K562 (cell line): ENCODE measurements at regions of chr11 and their contacts with region 1.

Region 1: DNA sequence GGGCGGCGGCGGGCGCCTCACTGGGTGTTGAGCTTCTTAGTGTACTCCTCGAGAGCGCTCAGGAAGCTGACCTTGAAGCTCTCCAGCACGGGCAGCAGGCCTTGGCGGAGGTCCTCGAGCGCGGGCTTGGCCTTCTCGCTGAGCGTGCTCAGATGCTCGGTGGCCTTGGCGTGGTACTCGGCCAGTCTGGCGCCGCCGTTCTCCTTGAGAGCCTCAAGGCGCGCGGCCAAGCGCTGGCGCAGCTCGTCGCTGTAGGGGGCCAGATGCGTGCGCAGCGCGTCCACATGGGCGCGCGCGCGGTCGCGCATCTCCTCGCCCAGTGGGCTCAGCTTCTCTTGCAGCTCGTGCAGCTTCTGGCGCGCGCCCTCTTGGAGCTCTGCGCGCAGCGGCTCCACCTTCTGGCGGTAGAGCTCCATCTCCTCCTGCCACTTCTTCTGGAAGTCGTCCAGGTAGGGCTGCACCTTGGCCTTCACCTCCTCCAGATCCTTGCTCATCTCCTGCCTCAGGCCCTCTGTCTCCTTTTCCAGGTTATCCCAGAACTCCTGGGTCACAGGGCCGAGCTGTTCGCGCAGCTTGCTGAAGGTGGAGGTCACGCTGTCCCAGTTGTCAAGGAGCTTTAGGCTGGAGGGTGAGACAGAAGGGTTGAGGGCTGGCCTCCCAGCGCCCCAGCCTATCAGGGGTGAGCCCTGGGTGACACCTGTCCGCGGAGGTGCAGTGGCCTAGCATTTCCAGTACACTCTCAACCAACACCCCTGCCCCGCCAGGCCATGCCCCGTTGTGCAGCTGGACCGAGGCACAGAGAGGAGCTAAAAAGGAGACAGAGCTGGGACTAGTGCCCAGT is 1.4 kb downstream of the APOA1 start:
- DNase-seq: peak; percentile 84 to 92 (median 91)
- ATAC-seq: peak; percentile 88
- H3K4me3 ChIP-seq: peak overlapping the region; percentile 24
- H3K27ac ChIP-seq: no peak overlapping the region
- H3K4me1 ChIP-seq: peaks cover 12 to 30% of the 10 kb centered on the region in 2 experiments; a peak in 4 of 5 replicates
- H3K27me3 ChIP-seq: peaks cover 0 to 7% of the 10 kb centered on the region in 2 experiments; a peak in 2 of 5 replicates
- CTCF ChIP-seq: peak; percentile 79 to 91 (median 80)
- EP300 ChIP-seq: no peak
- POLR2A ChIP-seq: no peak; the same call in 1 of the 2 replicates
- RAD21 ChIP-seq: peak; percentile 50 to 81

Region 2: DNA sequence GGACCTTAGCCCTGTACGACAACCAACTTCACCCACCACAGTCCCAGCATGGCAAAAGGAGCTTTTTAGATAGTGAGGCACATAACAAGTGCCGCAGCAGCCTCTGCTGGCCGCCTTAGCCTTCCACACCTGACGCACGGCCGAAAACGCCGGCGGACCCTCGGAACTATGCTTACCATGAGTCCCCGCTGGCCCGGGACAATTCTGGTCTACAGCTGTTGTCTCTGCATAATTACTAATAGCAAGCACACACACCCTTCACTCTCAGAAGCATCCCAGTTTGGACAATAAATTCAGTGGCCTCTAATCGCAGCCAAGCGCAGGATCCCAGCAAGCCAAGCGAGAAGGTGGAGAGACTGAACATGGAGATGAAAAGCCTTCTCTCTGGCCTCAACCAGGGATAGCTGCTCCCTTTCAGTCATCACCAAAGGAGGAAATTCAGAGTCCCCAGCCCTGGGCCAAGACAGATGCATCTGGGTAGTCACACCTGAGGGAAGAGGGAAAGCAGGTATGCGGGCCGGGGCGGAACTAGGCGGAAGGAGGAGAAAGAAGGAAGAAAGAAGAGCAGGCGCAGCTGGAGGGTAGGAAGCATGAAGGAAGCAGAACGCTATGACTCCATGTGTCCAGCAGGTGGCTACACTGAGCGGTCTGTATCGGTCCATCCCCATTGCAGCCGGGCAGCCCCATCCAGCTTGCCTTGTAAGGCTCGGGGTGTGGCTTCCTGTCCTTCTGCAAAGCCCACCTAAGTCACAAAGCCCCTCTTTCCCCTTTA is 103.6 kb before region 1 on chr11:
- CTCF ChIA-PET with region 1: no interaction called
- POLR2A ChIA-PET with region 1: no interaction called
- in situ Hi-C with region 1: no loop called
- intact Hi-C with region 1: loop called (anchors 10 kb)
- DNase-seq: peak; percentile 79 to 93 (median 88)
- ATAC-seq: peak; percentile 97
- H3K4me3 ChIP-seq: no peak overlapping the region
- H3K27ac ChIP-seq: no peak overlapping the region
- H3K4me1 ChIP-seq: no peaks in the 10 kb centered on the region
- H3K27me3 ChIP-seq: peaks cover 19 to 49% of the 10 kb centered on the region in 2 experiments; a peak in 4 of 5 replicates
- CTCF ChIP-seq: peak; percentile 82 to 86 (median 82)
- EP300 ChIP-seq: no peak
- POLR2A ChIP-seq: no peak
- RAD21 ChIP-seq: peak; percentile 40 to 77; a peak in 3 of 4 replicates

Region 3: DNA sequence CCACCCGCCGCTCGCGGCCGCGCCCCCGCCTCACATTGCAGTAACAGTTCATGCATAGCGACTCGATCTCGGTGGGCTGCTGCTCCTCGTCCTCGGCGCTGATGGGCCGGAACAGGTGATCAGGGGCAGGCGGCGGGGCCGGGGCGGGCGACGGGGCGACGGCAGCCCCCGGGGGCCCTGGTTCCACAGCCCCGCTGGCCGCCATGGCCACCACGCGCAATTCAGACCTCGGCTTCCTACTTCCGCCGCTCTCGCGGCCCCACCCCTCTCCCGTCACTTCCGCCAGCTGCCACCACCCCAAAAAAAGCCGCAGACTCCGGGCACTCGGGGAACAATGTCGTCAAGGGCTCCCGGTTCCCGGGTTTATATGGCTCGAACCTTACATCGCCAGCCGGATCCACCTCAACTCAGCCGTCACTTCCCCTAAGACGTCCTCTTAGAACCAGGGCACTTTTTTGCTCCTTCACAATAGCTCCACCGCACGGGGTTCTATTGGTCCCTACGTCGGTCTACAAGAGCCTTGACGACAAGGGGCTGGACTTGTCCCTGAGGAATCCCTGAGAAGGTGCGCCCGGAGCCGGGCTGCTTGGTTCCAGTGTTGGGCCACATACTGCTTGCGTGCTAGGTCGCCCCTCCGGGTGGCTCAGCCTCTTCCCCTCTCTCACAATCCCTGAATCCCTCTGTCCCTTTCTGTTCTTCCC is 48.1 kb before region 1 on chr11 and contains the start of gene ZPR1:
- CTCF ChIA-PET with region 1: no interaction called
- POLR2A ChIA-PET with region 1: interaction called, 4 read pairs
- in situ Hi-C with region 1: no loop called
- intact Hi-C with region 1: loop called (anchors 1 kb)
- DNase-seq: peak; percentile 83 to 93 (median 90)
- ATAC-seq: peak; percentile 87
- H3K4me3 ChIP-seq: peak within 1 kb of the TSS; percentile 98
- H3K27ac ChIP-seq: peak within 1 kb of the TSS; percentile 60
- H3K4me1 ChIP-seq: peaks cover 22 to 33% of the 10 kb centered on the region in 2 experiments; a peak in 4 of 5 replicates
- H3K27me3 ChIP-seq: no peaks in the 10 kb centered on the region
- CTCF ChIP-seq: no peak; a peak in 1 of 6 replicates
- EP300 ChIP-seq: no peak
- POLR2A ChIP-seq: peak; percentile 83
- RAD21 ChIP-seq: no peak
- polyA plus RNA-seq, gene ZPR1: 13.0 to 17.2 TPM